SK-N-SH (cell line): ENCODE measurements at regions of chr2 and their contacts with region 1.

Region 1: GRCh38 chr2:169109502-169110409 is 40.4 kb downstream of the DHRS9 start:
- DNase-seq: peak; percentile 78
- H3K4me3 ChIP-seq: peak overlapping the region in 1 of 2 experiments; percentile 26; a peak in 1 of 4 replicates
- H3K27ac ChIP-seq: no peak overlapping the region
- H3K4me1 ChIP-seq: no peaks in the 10 kb centered on the region; a peak in 1 of 4 replicates
- H3K27me3 ChIP-seq: no peaks in the 10 kb centered on the region
- CTCF ChIP-seq: peak; percentile 94
- EP300 ChIP-seq: no peak
- RAD21 ChIP-seq: peak; percentile 88

Region 2: DNA sequence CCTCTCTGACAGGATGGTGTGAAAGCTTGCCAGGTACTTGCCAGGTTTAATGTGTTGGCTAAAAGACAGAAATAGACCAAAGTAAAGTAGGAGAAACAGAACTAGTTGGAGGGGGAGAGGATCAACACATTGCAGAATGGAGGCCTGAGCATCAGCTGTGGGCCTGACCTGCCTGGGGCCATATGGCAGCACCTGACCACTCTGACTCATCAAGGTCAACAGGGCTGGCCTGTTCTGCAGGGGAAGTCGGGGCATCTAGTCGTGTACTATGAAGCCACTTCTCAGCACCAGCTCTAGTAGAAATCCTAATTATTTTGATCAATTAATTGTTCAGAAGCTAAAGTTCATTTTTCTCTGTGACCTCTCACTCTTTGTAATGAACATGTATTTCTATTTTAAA is 343.2 kb before region 1 on chr2:
- CTCF ChIA-PET with region 1: no interaction called
- POLR2A ChIA-PET with region 1: no interaction called
- DNase-seq: no peak
- H3K4me3 ChIP-seq: no peak overlapping the region
- H3K27ac ChIP-seq: no peak overlapping the region
- H3K4me1 ChIP-seq: peaks cover 2 to 7% of the 10 kb centered on the region in 2 experiments; a peak in 2 of 4 replicates
- H3K27me3 ChIP-seq: no peaks in the 10 kb centered on the region
- CTCF ChIP-seq: no peak
- EP300 ChIP-seq: no peak
- RAD21 ChIP-seq: no peak

Region 3: DNA sequence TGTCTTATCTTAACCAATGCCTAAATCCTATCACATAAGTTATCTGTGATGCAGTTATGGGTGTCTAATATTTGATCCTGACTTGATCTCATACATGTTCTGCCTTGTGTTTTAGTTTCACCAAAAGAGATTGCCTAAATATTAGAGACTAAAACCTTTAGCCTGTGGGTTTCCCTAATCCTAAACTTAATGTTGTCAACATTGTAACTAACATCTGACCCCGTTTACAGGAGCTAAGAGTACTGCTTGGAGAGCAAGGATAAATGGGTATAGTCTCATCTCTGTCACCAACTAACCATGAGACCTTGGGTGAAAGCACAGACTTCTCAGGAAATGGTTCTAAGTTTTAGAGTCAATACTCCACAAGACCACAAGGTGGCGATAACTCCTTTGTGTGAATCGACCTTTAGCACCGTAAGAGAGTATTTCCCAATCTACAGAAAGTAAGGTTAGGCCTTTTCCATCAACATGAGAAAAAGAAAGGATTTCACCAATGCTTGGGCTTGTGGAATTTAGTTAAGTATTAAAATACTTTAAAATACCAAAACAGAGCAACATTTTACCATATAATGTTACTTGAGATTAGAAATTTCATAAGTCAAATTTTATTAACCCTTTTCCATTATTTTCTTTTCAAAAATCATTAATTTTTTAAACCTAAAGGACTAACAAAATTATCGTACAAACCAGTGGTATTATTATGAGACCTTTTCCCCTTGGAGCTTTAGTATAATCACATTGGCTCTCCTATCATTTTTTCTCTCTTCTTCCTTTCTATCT is 148.1 kb before region 1 on chr2:
- CTCF ChIA-PET with region 1: interaction called, 13 read pairs
- POLR2A ChIA-PET with region 1: no interaction called
- DNase-seq: peak; percentile 21
- H3K4me3 ChIP-seq: no peak overlapping the region
- H3K27ac ChIP-seq: no peak overlapping the region
- H3K4me1 ChIP-seq: no peaks in the 10 kb centered on the region
- H3K27me3 ChIP-seq: no peaks in the 10 kb centered on the region
- CTCF ChIP-seq: peak; percentile 87
- EP300 ChIP-seq: no peak
- RAD21 ChIP-seq: peak; percentile 84

Region 4: GRCh38 chr2:169039702-169040101 is 70.1 kb before region 1 on chr2:
- CTCF ChIA-PET with region 1: no interaction called
- POLR2A ChIA-PET with region 1: no interaction called
- DNase-seq: no peak
- H3K4me3 ChIP-seq: no peak overlapping the region
- H3K27ac ChIP-seq: no peak overlapping the region
- H3K4me1 ChIP-seq: no peaks in the 10 kb centered on the region
- H3K27me3 ChIP-seq: no peaks in the 10 kb centered on the region
- CTCF ChIP-seq: no peak
- EP300 ChIP-seq: no peak
- RAD21 ChIP-seq: no peak

Region 5: DNA sequence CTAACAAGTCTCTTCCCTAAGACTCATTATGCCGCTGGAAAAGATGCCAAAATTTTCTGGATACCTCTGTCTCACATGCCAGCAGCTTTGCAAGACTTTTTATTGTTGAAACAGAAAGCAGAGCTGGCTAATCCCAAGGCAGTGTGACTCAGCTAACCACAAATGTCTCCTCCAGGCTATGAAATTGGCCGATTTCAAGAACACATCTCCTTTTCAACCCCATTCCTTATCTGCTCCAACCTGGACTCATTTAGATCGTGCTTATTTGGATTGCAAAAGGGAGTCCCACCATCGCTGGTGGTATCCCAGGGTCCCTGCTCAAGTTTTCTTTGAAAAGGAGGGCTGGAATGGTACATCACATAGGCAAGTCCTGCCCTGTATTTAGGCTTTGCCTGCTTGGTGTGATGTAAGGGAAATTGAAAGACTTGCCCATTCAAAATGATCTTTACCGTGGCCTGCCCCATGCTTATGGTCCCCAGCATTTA is 14.1 kb before region 1 on chr2:
- CTCF ChIA-PET with region 1: interaction called, 23 read pairs
- POLR2A ChIA-PET with region 1: no interaction called
- DNase-seq: no peak
- H3K4me3 ChIP-seq: no peak overlapping the region; a peak in 1 of 4 replicates
- H3K27ac ChIP-seq: no peak overlapping the region
- H3K4me1 ChIP-seq: no peaks in the 10 kb centered on the region
- H3K27me3 ChIP-seq: no peaks in the 10 kb centered on the region
- CTCF ChIP-seq: no peak
- EP300 ChIP-seq: peak in 1 of 2 experiments; percentile 19; a peak in 1 of 4 replicates
- RAD21 ChIP-seq: no peak

Region 6: GRCh38 chr2:169141713-169142352 is 32.1 kb after region 1 on chr2:
- CTCF ChIA-PET with region 1: interaction called, 94 read pairs
- POLR2A ChIA-PET with region 1: no interaction called
- DNase-seq: peak; percentile 55
- H3K4me3 ChIP-seq: no peak overlapping the region
- H3K27ac ChIP-seq: no peak overlapping the region
- H3K4me1 ChIP-seq: no peaks in the 10 kb centered on the region
- H3K27me3 ChIP-seq: no peaks in the 10 kb centered on the region
- CTCF ChIP-seq: peak; percentile 79
- EP300 ChIP-seq: no peak
- RAD21 ChIP-seq: peak; percentile 58

Region 7: GRCh38 chr2:169275696-169276444 is 166.1 kb after region 1 on chr2:
- CTCF ChIA-PET with region 1: interaction called, 22 read pairs
- POLR2A ChIA-PET with region 1: no interaction called
- DNase-seq: no peak
- H3K4me3 ChIP-seq: no peak overlapping the region
- H3K27ac ChIP-seq: no peak overlapping the region
- H3K4me1 ChIP-seq: no peaks in the 10 kb centered on the region
- H3K27me3 ChIP-seq: no peaks in the 10 kb centered on the region
- CTCF ChIP-seq: peak; percentile 28; the same call in 1 of the 2 replicates
- EP300 ChIP-seq: no peak
- RAD21 ChIP-seq: peak; percentile 31; the same call in 1 of the 2 replicates